AG04449 (cell line): ENCODE measurements at regions of chr5 and their contacts with region 1.

Region 1: DNA sequence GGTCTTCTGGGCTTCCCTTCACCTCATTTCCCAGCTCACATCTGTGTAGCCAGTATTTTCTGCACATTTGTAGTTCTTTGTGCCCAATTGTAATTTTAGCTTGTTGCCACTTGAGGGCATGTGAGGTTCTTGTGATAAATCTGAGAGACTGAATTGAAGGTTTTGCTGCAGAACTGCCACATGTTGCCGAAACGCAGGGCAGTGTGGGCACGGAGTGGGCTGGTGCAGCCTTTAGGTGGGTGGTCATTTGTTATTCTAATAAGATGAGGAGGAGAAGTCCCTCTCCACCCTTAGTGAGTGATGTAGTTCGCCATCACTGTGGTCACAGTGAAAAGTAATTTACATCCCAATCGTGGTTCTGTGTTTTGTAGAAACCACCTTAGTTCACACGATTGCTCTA is 21.2 kb downstream of the OTULIN start:
- DNase-seq: no peak
- H3K4me3 ChIP-seq: no peak overlapping the region
- CTCF ChIP-seq: peak; percentile 63

Region 2: GRCh38 chr5:14574891-14575496 is 110.8 kb before region 1 on chr5:
- CTCF ChIA-PET with region 1: no interaction called
- POLR2A ChIA-PET with region 1: no interaction called
- DNase-seq: no peak
- H3K4me3 ChIP-seq: no peak overlapping the region
- CTCF ChIP-seq: no peak

Region 3: GRCh38 chr5:14700478-14701436 is 15.0 kb after region 1 on chr5:
- CTCF ChIA-PET with region 1: interaction called, 60 read pairs
- POLR2A ChIA-PET with region 1: no interaction called
- DNase-seq: no peak
- H3K4me3 ChIP-seq: no peak overlapping the region
- CTCF ChIP-seq: no peak

Region 4: DNA sequence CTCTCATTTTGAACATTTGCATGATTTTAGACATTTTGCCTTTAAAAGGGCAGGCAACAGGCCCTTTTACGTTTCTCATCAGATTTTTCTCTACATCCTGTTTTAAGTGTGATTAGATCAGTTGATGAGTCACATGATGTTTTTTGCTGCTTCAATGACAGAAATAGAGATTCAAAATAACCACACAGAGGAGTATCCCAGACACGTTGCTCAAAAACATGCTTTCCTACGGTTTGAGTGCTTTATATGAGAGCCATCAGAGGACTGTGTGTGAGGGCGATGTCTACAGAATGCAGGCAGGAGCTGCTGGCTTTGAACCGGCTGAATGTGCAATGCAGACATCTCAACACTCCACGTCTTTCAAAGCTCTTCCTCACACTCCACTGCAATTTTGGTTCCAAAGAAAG is 20.9 kb after region 1 on chr5:
- CTCF ChIA-PET with region 1: interaction called, 60 read pairs
- POLR2A ChIA-PET with region 1: no interaction called
- DNase-seq: peak; percentile 41
- H3K4me3 ChIP-seq: no peak overlapping the region
- CTCF ChIP-seq: no peak

Region 5: GRCh38 chr5:14720236-14720971 is 34.6 kb after region 1 on chr5:
- CTCF ChIA-PET with region 1: interaction called, 39 read pairs
- POLR2A ChIA-PET with region 1: no interaction called
- DNase-seq: peak; percentile 69
- H3K4me3 ChIP-seq: no peak overlapping the region
- CTCF ChIP-seq: no peak

Region 6: DNA sequence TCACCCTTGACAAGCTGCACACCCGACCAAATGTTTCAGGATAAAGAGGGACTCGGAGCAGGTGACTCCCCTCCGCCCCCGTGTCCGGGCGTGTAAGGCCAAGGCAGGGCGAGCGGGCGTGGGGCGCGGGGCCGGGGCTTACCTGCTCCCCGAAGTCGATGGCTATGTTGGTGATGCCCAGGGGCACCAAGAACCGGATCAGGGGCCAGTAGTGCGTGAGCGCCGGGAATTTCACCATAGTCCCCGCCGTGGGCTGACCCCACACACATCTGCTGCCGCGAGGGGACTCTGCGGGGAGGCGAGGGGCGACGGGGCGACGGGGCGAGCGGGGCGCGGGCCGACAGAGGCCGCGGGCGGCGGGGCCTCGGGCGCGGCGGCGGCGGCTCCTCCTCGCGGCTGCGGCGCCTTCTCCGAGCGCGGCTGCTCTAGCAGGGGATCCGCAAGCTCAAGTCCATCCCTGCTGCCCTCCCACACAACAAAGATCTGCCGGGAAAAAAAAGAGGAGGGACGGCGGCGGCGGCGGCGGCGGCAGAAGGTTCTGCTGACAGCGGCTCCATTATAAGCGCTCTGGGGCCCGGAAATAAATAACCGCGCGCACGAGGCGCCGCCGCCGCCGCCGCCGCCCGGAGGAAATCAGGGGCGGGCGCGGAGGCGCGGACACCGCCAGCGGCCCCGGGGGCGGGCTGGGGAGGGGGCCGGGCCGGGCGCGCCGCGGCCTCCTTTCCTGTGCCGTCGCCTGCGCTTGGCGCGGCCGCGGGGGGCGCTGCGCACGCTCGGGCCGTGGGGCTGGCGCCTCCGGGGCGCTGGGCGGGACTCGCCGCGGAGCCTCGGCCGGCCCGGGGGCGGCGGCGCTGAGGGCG is 185.7 kb after region 1 on chr5 and contains the start of gene ANKH:
- CTCF ChIA-PET with region 1: interaction called, 11 read pairs
- POLR2A ChIA-PET with region 1: no interaction called
- DNase-seq: no peak
- H3K4me3 ChIP-seq: peak within 1 kb of the TSS; percentile 74
- CTCF ChIP-seq: peak; percentile 47

Region 7: DNA sequence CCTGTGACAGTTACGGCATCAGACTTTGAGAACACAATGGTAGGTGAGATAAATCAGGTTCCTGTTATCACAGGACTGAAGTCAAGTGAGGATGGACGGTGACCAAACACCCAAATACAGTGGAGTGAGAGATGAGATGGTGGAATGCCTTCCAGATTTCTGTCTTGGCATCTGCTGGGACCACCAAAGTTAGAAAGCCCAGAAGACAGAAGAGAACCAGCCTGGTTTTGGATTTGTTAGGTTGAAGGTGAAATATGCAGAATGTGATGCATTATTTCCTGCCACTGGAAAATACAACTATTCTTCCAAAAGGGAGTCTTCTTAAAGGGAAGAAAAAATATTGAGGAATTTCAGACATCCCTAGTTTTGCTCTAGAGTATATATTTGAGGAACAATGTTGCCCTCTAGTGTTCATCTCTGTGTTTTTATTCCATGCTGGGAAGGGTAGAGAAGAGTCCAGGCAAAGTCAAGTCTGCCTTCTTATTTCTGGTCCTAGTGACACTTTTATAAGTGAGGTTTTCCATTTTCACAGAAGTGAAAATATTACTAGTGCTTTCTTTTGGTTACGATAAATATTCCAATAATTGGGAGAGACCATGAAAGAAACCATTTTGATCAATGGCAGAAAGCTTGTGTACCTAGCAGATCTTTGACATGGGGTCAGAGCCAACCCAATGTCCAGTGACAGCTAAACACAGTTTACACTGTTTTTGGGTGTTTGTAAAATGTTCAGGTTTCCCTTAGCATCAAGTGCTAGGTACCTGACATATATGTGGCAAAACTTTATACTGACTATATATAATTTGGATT is 328.1 kb after region 1 on chr5:
- CTCF ChIA-PET with region 1: interaction called, 78 read pairs
- POLR2A ChIA-PET with region 1: no interaction called
- DNase-seq: no peak
- H3K4me3 ChIP-seq: no peak overlapping the region
- CTCF ChIP-seq: peak; percentile 32